SK-N-SH (cell line): ENCODE measurements at regions of chr3 and their contacts with region 1.

Region 1: GRCh38 chr3:101809178-101810021 is 30.4 kb downstream of the NXPE3 start:
- DNase-seq: peak; percentile 39
- H3K4me3 ChIP-seq: no peak overlapping the region; a peak in 1 of 4 replicates
- H3K27ac ChIP-seq: peak overlapping the region in 1 of 2 experiments; percentile 43; a peak in 3 of 4 replicates
- H3K4me1 ChIP-seq: peaks cover 6 to 7% of the 10 kb centered on the region in 2 experiments; a peak in 3 of 4 replicates
- H3K27me3 ChIP-seq: no peaks in the 10 kb centered on the region
- CTCF ChIP-seq: peak; percentile 75
- EP300 ChIP-seq: no peak
- RAD21 ChIP-seq: peak; percentile 78

Region 2: DNA sequence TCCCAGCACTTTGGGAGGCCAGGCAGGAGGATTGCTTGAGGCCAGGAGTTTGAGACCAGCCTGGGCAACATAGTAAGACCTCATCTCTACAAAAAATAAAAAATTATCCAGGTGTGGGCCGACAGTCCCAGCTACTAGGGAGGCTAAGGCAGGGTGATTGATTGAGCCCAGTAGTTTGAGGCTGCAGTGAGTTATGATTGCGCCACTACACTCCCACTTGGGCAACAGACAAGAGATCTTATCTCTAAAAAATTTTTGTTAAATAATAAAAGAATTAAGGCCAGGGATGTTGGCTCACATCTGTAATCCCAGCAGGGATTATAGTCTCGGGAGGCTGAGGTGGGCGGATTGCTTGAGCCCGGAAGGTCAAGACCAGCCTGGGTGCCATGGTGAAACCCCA is 14.1 kb after region 1 on chr3:
- CTCF ChIA-PET with region 1: interaction called, 10 read pairs
- POLR2A ChIA-PET with region 1: no interaction called
- DNase-seq: no peak
- H3K4me3 ChIP-seq: no peak overlapping the region
- H3K27ac ChIP-seq: no peak overlapping the region
- H3K4me1 ChIP-seq: peaks cover 2 to 16% of the 10 kb centered on the region in 2 experiments; a peak in 3 of 4 replicates
- H3K27me3 ChIP-seq: no peaks in the 10 kb centered on the region
- CTCF ChIP-seq: no peak
- EP300 ChIP-seq: no peak
- RAD21 ChIP-seq: no peak

Region 3: GRCh38 chr3:101828691-101829436 is 19.5 kb after region 1 on chr3:
- CTCF ChIA-PET with region 1: interaction called, 14 read pairs
- POLR2A ChIA-PET with region 1: no interaction called
- DNase-seq: no peak
- H3K4me3 ChIP-seq: peak overlapping the region; percentile 50 to 63; a peak in 3 of 4 replicates
- H3K27ac ChIP-seq: peak overlapping the region; percentile 78 to 88; a peak in 3 of 4 replicates
- H3K4me1 ChIP-seq: peaks cover 6 to 16% of the 10 kb centered on the region in 2 experiments
- H3K27me3 ChIP-seq: no peaks in the 10 kb centered on the region
- CTCF ChIP-seq: no peak
- EP300 ChIP-seq: no peak
- RAD21 ChIP-seq: no peak